ENCODE measurements at regions of chr1 and their contacts with region 1.

Region 1: GRCh38 chr1:7752512-7753417 is 18.3 kb upstream of the VAMP3 start:
- DNase-seq: peak; percentile 9
- H3K4me3 ChIP-seq: peak overlapping the region; percentile 46
- CTCF ChIP-seq: peak; percentile 53

Region 2: DNA sequence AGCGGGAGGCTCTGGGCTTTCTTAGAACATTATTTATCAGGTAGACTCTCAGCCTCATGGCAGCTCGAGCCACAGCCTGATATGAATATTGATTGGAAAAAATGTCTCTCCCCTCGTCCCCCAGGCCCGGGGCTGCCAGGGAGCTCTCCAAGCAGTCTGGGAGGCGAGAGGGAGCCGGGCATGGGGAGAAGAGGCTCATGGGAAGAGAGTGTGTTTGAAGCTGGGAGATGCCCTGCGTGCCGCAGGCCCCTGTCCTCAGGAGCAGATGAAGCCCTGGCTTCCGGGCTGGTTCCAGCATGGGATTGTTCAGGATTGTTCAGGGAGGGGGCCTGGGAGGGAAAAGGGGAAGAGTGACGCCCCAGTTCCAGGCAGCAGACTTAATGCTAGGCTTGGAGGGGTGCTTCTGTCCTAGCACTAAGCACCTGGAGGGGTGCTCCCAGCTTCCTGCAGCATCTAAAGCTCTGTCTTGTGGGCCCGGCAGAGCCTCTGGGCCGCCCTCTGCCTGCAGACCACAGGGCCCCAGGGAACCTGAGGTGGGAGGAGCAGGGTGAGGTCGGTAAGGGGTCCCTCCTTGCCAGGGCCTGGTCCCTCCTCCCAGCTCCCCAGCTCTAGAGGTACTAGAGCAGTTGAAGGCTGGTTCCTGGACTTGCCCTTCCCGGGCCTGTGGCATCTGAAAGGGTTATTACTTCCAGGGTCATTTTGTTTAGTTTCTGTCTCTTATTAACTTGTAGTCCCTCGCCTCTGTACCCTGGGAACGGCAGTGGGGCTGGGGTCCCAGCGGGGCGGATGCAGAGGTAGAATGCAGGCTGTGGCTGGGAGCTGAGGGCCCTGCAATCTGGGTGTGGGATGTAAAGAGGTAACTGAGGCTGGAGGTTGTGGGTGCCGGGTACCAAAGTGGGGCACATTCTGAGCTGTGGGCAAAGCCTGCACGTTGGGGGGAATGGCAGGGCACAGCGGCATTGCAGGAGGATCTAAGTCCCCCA is 316.5 kb before region 1 on chr1:
- CTCF ChIA-PET with region 1: no interaction called
- POLR2A ChIA-PET with region 1: no interaction called
- DNase-seq: no peak
- H3K4me3 ChIP-seq: no peak overlapping the region
- CTCF ChIP-seq: no peak

Region 3: GRCh38 chr1:7690496-7691182 is 62.1 kb before region 1 on chr1:
- CTCF ChIA-PET with region 1: interaction called, 21 read pairs
- POLR2A ChIA-PET with region 1: no interaction called
- DNase-seq: no peak
- H3K4me3 ChIP-seq: no peak overlapping the region
- CTCF ChIP-seq: no peak

Region 4: DNA sequence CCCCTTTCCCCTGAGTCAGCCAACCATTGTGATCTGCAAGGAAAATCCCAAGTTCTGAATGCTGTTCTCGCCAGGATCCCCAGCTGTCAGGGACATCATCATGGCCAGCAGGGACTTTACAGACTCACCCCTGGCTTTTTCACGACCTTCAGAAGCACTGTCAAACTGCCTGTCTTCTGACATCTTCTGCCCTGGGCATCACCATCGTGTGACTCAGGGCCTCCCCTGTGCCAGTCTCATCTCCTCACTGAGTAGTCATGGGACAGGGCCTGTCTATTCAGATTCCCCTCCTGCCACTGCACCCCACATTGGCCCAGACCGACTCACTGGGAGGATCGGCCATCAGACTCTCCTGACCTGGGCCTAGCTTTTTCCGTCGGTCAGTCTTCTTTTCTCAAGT is 54.1 kb before region 1 on chr1:
- CTCF ChIA-PET with region 1: interaction called, 20 read pairs
- POLR2A ChIA-PET with region 1: no interaction called
- DNase-seq: no peak
- H3K4me3 ChIP-seq: no peak overlapping the region
- CTCF ChIP-seq: no peak

Region 5: GRCh38 chr1:7704214-7705047 is 48.3 kb before region 1 on chr1:
- CTCF ChIA-PET with region 1: interaction called, 20 read pairs
- POLR2A ChIA-PET with region 1: no interaction called
- DNase-seq: peak; percentile 5
- H3K4me3 ChIP-seq: peak overlapping the region; percentile 23
- CTCF ChIP-seq: no peak

Region 6: GRCh38 chr1:7726623-7727022 is 26.1 kb before region 1 on chr1:
- CTCF ChIA-PET with region 1: interaction called, 46 read pairs
- POLR2A ChIA-PET with region 1: no interaction called
- DNase-seq: no peak
- H3K4me3 ChIP-seq: no peak overlapping the region
- CTCF ChIP-seq: no peak

Region 7: DNA sequence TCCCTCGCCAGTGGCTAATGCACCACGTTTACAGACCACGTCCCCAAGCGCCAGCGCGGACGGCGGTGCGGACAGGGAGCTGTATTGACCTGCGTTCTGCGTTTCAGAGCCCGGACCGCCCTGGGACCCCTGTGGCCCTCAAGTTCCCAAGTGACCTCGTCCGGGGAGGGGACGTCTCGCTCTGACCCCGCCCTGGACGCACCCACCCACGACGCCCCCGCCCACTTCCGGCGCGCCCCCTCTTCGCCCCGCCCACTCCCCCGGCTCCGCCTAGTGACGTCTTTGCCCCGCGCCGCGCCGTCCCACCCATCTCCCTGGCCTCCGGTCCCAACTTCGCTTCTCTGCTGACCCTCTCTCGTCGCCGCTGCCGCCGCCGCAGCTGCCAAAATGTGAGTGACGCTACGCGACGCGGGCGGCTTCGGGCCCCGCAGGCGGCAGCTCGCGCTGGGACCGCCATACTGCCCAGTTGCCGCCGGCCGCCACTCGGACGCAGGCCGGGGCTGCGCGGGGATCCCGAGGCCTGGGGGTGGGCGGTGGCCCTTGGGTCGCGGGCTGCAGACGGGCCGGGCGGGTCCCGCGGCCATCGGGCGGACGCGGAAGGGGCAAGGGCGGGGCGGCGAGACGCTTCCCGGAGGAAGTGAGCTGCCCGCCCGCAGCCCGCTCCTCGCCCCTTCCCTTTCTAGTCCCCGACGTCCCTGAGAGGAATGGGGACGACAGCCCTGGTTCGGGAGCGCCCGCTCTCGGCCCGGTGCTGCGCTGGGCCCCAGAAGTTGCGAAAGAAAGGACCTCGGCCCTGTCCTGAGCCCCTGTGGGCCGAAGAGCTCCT is 18.4 kb after region 1 on chr1 and contains the start of gene VAMP3:
- CTCF ChIA-PET with region 1: interaction called, 62 read pairs
- POLR2A ChIA-PET with region 1: no interaction called
- DNase-seq: no peak
- H3K4me3 ChIP-seq: peak within 1 kb of the TSS; percentile 89
- CTCF ChIP-seq: no peak

Region 8: DNA sequence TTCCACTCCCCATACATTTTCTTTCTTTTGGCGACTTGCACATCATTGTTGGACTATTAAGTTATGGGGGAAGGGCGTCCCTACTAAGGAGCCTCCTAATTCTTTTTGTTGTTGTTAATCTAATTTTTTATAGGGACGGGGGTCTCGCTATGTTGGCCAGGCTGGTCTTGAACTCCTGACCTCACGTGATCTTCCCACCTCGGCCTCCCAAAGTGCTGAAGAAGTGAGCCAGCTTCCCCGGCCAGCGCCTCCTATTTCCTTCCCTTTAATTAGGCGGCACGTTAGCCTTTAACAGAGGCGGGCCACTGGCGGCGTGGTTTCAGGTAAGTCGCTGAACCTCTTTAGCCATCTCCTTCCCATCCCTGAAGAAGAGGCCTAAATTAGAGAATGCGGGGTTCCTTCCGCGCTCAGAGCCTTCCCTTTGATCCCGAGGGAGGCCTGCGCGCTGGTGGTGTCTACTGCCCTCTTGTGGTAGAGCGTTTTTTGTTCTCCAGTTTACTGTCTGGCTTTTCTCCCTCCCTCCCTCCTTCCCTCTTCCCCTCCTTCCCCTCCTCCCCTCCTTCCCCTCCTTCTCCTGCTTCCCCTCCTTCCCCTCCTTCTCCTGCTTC is 149.8 kb after region 1 on chr1:
- CTCF ChIA-PET with region 1: interaction called, 27 read pairs
- POLR2A ChIA-PET with region 1: no interaction called
- DNase-seq: no peak
- H3K4me3 ChIP-seq: no peak overlapping the region
- CTCF ChIP-seq: peak; percentile 82

Measured in AG04449 (cell line).